ENCODE measurements at regions of chr17 and their contacts with region 1.

Region 1: DNA sequence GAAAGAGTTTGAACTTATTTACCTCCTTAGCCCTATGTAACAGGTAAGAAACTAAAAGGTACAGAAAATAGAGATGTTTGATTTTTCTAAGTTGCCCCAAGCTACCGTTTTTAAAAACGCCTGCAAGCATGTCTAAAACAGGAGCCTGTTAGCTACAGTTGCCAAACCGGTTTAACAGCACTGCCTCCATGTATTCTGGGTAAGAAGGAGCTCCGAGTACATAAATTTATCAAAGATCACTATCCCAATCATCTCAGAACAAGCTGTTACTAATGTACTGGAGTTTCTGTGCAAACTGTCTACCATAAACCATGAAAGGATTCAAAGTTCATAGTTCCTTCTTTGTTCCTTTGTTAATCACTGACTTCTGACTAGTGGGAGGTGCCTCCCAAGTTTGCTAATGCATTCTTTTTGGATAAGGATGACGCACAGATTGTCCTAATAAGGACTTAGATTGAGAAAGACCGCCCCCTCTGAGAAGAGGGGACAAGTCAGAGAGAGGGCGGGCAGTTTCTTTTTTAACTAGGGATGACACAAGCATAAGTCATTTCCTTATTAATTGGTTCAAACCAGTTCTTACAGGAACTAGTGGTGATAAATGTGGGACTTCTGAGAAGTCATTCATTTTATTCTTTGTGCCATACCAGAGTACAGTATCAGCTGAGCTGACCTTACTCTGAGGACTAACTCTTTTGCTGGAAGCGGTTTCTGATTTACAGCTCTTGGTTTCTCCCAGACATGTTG is 55.3 kb downstream of the TUBD1 start:
- H3K4me3 ChIP-seq: peak overlapping the region; percentile 70
- H3K27ac ChIP-seq: peak overlapping the region; percentile 95
- H3K4me1 ChIP-seq: peaks cover 21% of the 10 kb centered on the region
- CTCF ChIP-seq: no peak

Region 2: GRCh38 chr17:59093702-59094231 is 743.7 kb before region 1 on chr17:
- CTCF ChIA-PET with region 1: no interaction called
- POLR2A ChIA-PET with region 1: no interaction called
- H3K4me3 ChIP-seq: peak overlapping the region; percentile 27
- H3K27ac ChIP-seq: peak overlapping the region; percentile 62
- H3K4me1 ChIP-seq: peaks cover 31% of the 10 kb centered on the region
- CTCF ChIP-seq: no peak

Region 3: GRCh38 chr17:59746849-59747445 is 90.5 kb before region 1 on chr17:
- CTCF ChIA-PET with region 1: interaction called, 73 read pairs
- POLR2A ChIA-PET with region 1: interaction called, 5 read pairs
- H3K4me3 ChIP-seq: no peak overlapping the region
- H3K27ac ChIP-seq: no peak overlapping the region
- H3K4me1 ChIP-seq: no peaks in the 10 kb centered on the region
- CTCF ChIP-seq: no peak

Region 4: DNA sequence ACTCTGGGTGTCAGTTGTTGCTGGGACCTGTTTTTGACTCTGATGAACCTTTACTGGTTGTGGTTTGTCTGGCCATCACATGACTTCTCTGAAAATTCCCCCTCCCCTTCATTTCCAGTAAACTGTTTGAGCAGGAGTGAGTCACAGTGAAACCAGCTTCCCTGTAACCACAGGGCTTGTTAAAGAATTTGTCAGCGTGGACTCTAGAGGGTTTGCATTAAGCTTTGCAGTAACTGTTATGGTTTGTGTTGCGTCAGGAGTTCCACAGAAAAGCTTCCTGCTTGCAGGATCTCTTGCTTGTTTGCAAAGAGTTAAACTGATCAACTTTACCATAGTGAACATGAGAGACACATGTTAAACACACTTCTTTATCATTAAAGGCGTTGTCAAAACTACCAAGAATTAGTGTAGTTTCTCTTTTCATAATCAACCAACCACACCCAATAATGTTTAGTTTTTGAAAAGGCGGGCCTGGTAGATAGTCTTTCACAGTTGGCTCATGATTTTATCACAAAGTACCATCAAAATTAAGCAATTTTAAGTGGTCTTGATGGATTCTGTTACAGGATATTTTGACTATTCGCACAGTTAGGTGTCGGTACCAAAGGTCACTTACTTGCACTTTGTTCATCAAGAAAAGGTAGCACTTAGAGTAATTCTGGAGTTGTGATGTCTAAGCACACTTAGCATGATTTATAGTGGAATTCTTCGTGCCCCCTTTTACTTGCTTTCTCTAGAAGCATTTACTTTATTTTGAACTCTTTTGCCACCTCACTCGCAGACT is 50.8 kb before region 1 on chr17:
- CTCF ChIA-PET with region 1: interaction called, 10 read pairs
- POLR2A ChIA-PET with region 1: interaction called, 63 read pairs
- H3K4me3 ChIP-seq: peak overlapping the region; percentile 14; the same call in 1 of the 2 replicates
- H3K27ac ChIP-seq: peak overlapping the region; percentile 85
- H3K4me1 ChIP-seq: peaks cover 40% of the 10 kb centered on the region
- CTCF ChIP-seq: no peak

Measured in HEK293 (cell line).